ENCODE measurements at regions of chr17 and their contacts with region 1.

Region 1: GRCh38 chr17:62109378-62109902 is 44.4 kb upstream of the MED13 start:
- DNase-seq: peak; percentile 84
- CTCF ChIP-seq: peak; percentile 98

Region 2: GRCh38 chr17:61412143-61412859 is 697.1 kb before region 1 on chr17:
- CTCF ChIA-PET with region 1: interaction called, 43 read pairs
- POLR2A ChIA-PET with region 1: no interaction called
- DNase-seq: peak; percentile 92
- CTCF ChIP-seq: peak; percentile 89

Region 3: GRCh38 chr17:61641084-61641483 is 468.4 kb before region 1 on chr17:
- CTCF ChIA-PET with region 1: interaction called, 10 read pairs
- POLR2A ChIA-PET with region 1: no interaction called
- DNase-seq: no peak
- CTCF ChIP-seq: no peak

Region 4: GRCh38 chr17:62030209-62030608 is 79.2 kb before region 1 on chr17:
- CTCF ChIA-PET with region 1: interaction called, 14 read pairs
- POLR2A ChIA-PET with region 1: no interaction called
- DNase-seq: no peak
- CTCF ChIP-seq: no peak

Region 5: DNA sequence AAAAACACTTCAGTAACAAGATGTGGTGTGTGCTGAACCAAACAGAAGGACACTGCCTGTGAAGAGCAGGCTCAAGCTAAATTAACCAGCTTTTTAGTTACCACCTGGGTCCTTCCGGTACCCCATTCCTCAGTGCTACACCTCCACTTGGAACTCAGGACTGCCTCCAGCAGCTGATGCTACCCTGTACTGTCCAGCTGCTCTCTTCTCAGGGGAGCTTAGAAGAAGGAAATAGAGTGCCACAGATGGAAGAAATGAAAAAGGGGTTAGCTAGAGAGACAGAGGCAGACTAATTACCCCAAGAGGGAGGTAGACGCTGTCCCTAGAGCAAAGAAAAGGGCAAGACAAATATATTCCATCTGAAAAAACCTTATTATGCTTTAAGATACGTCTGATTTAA is 50.0 kb before region 1 on chr17:
- CTCF ChIA-PET with region 1: interaction called, 15 read pairs
- POLR2A ChIA-PET with region 1: interaction called, 4 read pairs
- DNase-seq: no peak
- CTCF ChIP-seq: no peak

Region 6: GRCh38 chr17:62075308-62075815 is 34.1 kb before region 1 on chr17:
- CTCF ChIA-PET with region 1: interaction called, 26 read pairs
- POLR2A ChIA-PET with region 1: no interaction called
- DNase-seq: no peak
- CTCF ChIP-seq: no peak

Region 7: GRCh38 chr17:62126292-62126691 is 16.9 kb after region 1 on chr17:
- CTCF ChIA-PET with region 1: interaction called, 16 read pairs
- POLR2A ChIA-PET with region 1: no interaction called
- DNase-seq: no peak
- CTCF ChIP-seq: no peak